AG04449 (cell line): ENCODE measurements at regions of chr9 and their contacts with region 1.

Region 1: DNA sequence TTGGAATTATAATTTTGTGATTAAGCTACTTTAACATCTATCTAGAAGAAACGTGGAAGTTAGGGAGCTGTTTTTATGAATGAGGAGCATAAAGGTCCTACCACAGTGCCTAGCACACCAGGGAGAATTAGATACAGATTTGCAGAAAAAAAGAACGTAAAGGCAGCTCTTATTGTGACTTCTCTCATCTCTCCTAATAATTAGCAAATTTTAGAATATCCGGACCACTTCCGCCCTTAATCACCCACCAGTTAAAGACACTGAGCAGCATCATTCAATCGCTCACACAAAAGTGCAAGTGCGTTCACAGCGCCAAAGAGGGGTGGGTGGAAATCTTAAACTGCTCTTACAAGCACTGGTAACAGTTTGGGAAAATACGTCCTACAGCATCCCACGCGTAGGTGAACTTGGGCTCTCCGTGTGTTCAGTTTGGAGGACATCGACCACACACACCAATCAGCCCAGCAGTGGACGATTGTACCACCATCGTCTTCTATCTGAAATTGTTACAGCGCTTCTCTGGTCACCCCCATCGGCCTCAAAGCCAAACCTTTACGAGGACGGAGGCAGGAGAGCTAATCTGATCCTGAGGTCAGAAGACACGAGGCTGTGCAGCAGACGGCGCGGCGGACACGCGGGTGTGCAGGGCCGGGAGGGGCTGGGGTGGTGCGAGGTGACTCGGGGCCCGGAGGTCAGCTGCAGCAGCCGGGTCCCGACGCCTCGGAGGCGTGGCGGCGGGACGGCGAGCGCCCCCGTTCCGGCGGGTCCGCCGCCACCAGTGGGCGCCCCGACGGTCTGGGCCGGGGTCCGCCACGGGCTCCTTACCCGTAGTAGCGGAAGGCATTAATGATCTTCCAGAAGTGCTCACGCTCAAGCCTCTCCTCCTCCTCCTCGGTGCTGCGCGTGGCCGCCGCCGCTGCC is 646 bp downstream of the CARNMT1 start:
- DNase-seq: no peak
- H3K4me3 ChIP-seq: peak overlapping the region; percentile 74
- CTCF ChIP-seq: peak; percentile 3

Region 2: GRCh38 chr9:75010570-75010969 is 16.9 kb before region 1 on chr9:
- CTCF ChIA-PET with region 1: interaction called, 16 read pairs
- POLR2A ChIA-PET with region 1: interaction called, 3 read pairs
- DNase-seq: no peak
- H3K4me3 ChIP-seq: no peak overlapping the region
- CTCF ChIP-seq: no peak

Region 3: DNA sequence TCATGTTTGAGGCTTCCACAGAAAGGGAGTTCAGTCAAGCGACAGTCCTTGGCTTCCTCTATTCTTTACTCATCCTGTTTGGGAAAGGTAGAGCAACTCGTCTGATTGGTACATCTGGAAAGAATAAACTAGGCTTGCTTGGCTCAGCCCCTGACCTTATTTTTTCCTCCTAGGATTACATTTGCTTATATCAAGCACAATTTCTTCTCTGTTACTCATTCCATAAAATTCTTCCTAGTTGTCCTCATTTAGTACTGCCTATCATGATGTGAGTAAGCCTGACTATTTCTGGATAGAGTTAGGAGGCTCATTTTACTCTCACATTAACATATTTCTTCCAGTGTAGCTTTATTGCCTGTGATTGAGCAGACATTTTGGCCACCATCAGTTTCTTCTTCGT is 11.6 kb after region 1 on chr9:
- CTCF ChIA-PET with region 1: interaction called, 22 read pairs
- POLR2A ChIA-PET with region 1: interaction called, 12 read pairs
- DNase-seq: peak; percentile 79
- H3K4me3 ChIP-seq: no peak overlapping the region
- CTCF ChIP-seq: no peak

Region 4: GRCh38 chr9:75071530-75072124 is 44.2 kb after region 1 on chr9:
- CTCF ChIA-PET with region 1: interaction called, 21 read pairs
- POLR2A ChIA-PET with region 1: interaction called, 5 read pairs
- DNase-seq: no peak
- H3K4me3 ChIP-seq: no peak overlapping the region
- CTCF ChIP-seq: no peak